Sigmoid colon (tissue), 7 donors: ENCODE measurements at regions of chr14 and their contacts with region 1.

Region 1: DNA sequence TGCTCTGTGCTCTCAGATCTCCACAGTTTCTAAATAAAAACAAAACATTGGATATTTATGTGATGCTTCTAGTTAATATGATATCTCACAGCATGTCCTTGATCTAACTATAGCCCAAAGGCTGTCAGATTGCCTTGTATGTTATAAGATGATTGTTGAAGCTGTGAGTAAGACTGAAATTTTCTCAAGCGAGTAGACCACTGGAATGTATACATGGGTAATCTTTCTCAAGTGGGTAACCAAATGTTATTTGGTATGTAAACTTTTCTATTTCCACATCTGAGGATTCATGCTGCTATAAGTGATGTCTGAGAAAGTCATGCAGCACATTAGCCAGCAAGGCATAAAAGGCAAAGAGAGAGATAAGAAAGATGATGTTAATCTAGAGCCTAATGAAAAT is 886.7 kb downstream of the NRXN3 start:
- DNase-seq: no peak
- H3K4me3 ChIP-seq: no peak overlapping the region
- H3K27ac ChIP-seq: peak overlapping the region in 3 of 4 donors; percentile 56 to 73 (median 57)
- H3K4me1 ChIP-seq: peaks cover 0 to 24% (median 22%) of the 10 kb centered on the region in 4 donors
- H3K27me3 ChIP-seq: no peaks in the 10 kb centered on the region
- CTCF ChIP-seq: no peak
- EP300 ChIP-seq: no peak
- POLR2A ChIP-seq: no peak

Region 2: GRCh38 chr14:79278798-79279644 is 222.1 kb after region 1 on chr14:
- intact Hi-C with region 1: loop called (anchors 10 kb)
- DNase-seq: peak; percentile 93
- H3K4me3 ChIP-seq: peak overlapping the region; percentile 63 to 66 (median 65)
- H3K27ac ChIP-seq: peak overlapping the region; percentile 67 to 81 (median 76)
- H3K4me1 ChIP-seq: peaks cover 0 to 39% (median 23%) of the 10 kb centered on the region in 4 donors
- H3K27me3 ChIP-seq: no peaks in the 10 kb centered on the region
- CTCF ChIP-seq: no peak
- EP300 ChIP-seq: no peak
- POLR2A ChIP-seq: peak; percentile 75 to 83